ENCODE measurements at regions of chr5 and their contacts with region 1.

Region 1: DNA sequence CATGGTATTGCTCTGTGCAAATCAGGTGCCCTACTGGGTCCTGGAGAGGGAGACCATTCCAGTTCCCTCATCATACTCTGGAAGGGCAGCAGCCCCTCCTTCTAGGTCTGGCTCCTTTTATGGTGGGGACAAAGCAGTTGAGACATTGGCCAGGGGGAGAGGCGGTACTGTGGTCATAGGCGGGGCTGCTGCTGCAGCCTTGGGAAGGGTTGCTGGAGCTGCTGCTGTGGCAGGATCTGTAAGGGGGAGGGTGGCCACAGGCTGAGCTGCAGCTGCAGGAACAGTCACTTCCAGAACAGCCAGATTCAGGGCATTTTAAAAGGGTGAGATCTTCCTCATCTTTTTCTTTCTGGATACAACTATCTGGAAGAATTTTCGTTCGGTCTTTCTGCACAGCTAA is 233.0 kb upstream of the SGCD start:
- DNase-seq: no peak
- ATAC-seq: no peak
- H3K4me3 ChIP-seq: no peak overlapping the region
- H3K27ac ChIP-seq: no peak overlapping the region
- H3K4me1 ChIP-seq: no peaks in the 10 kb centered on the region
- H3K27me3 ChIP-seq: no peaks in the 10 kb centered on the region
- CTCF ChIP-seq: no peak

Region 2: DNA sequence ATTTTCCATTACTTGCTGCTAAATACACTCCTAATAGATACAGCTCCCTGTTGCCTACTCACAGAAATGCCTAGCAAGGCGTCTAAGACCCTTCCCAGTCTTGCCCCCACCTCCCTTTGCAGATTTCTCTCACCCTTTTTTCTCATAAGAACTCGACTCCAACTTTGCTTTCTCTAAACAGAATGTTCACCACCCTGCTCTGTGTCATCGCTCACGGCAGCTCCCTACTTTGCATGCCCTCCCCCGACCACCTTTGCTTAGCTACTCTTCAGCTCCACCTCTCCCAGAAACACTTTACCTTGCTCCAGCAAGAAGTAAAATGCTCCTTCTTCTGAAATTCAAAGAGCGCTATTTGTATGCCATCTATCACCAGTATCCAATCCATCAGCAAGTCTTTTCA is 740.9 kb after region 1 on chr5:
- CTCF ChIA-PET with region 1: no interaction called
- POLR2A ChIA-PET with region 1: interaction called, 17 read pairs
- in situ Hi-C with region 1: no loop called
- intact Hi-C with region 1: no loop called
- DNase-seq: no peak
- ATAC-seq: no peak
- H3K4me3 ChIP-seq: no peak overlapping the region
- H3K27ac ChIP-seq: no peak overlapping the region
- H3K4me1 ChIP-seq: no peaks in the 10 kb centered on the region
- H3K27me3 ChIP-seq: no peaks in the 10 kb centered on the region
- CTCF ChIP-seq: no peak

Measured in Panc1 (cell line).